Activated naive CD4-positive, alpha-beta T cell treated with anti-CD3 and anti-CD28 coated beads for 36 hours (primary cell): ENCODE measurements at regions of chr10 and their contacts with region 1.

Region 1: GRCh38 chr10:124802313-124802675 is 675 bp downstream of the ABRAXAS2 start:
- DNase-seq: peak; percentile 44
- H3K4me3 Mint-ChIP-seq: peak overlapping the region; percentile 90
- H3K27ac Mint-ChIP-seq: peak overlapping the region; percentile 83
- H3K4me1 Mint-ChIP-seq: peaks cover 17% of the 10 kb centered on the region
- H3K27me3 Mint-ChIP-seq: no peaks in the 10 kb centered on the region

Region 2: DNA sequence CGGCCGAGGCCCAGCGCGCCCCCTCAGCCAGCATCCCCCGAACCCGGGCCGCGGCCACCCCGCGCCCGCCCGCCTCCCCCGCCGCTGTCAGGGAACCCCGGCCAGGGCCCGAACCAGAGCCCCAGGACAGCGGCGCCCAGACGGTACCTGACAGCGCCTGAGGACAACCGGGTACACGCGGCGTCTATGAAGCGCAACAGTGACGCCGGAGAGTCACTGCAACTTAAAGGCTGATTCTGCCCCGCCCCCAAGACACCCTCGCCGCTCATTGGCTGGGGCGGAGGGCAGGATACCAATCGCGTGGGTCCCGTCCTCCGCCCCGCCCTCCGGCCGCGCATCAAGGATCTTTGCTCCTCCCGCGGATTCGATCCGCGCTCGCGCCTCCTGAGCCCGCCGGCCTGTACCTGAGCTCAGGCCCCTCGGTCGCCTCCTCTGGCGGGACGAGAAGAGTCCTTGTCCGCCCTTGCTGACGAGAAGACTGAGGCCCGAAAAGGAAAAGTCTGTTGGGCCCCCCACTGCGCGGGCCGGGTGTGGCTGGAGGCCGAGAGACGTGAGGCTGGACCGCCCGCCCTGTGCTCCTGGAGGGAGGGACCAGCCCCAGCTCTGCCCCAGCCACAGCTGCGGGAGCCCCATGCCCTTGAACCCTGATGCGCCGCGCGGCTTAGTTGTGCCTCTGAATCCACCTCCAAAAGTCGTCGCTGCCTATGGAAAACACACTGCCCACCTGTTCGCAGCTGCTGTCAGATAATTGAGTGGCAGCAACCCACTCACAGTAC is 383.4 kb before region 1 on chr10 and contains the start of gene OAT:
- CTCF ChIA-PET with region 1: no interaction called
- intact Hi-C with region 1: loop called (anchors 2 kb)
- DNase-seq: peak; percentile 98
- H3K4me3 Mint-ChIP-seq: peak within 1 kb of the TSS; percentile 76
- H3K27ac Mint-ChIP-seq: no peak within 1 kb of the TSS
- H3K4me1 Mint-ChIP-seq: peaks cover 25% of the 10 kb centered on the region
- H3K27me3 Mint-ChIP-seq: no peaks in the 10 kb centered on the region
- total RNA-seq, gene OAT: 37.4 to 41.6 TPM

Region 3: DNA sequence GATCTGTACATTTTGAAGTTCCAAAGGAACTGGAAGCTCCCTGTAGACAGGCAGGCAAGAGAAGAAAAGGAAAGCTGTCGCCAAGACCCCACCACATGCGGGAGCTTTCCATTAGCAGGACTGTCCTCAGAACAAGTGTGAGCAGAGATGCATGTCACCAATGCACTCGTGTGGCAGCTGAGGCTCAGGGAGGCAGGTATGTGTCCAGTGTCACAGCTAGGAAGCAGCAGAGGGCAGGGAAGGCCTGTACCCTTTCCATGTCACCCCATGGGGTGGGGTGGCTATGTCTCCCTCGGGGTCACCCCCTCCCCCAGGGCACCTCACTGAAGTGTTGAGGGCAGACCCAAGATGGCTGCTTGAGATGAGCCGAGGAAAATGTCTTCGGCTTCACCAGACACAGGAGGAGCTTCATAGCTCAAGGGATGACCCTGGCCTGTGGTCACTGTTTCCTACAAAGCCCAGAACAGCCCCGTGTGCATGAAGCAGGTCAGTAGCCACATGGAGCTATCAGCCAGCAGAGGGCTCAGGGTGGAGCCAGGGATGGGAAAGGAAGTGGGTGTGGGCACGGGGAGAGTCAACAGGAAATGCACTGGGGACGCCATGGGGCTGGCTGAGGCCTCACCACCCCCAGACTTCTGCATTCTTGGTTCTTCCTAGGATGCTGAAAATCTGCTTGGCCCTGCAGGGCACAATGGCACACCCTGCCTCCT is 154.7 kb before region 1 on chr10:
- CTCF ChIA-PET with region 1: no interaction called
- intact Hi-C with region 1: loop called (anchors 5 kb)
- DNase-seq: peak; percentile 88
- H3K4me3 Mint-ChIP-seq: peak overlapping the region; percentile 49
- H3K27ac Mint-ChIP-seq: peak overlapping the region; percentile 73
- H3K4me1 Mint-ChIP-seq: peaks cover 69% of the 10 kb centered on the region
- H3K27me3 Mint-ChIP-seq: no peaks in the 10 kb centered on the region

Region 4: GRCh38 chr10:124791378-124792348 is 10.6 kb before region 1 on chr10 and contains the start of gene EEF1AKMT2:
- CTCF ChIA-PET with region 1: interaction called, 3 read pairs
- intact Hi-C with region 1: loop called (anchors 1 kb)
- DNase-seq: peak; percentile 79
- H3K4me3 Mint-ChIP-seq: peak within 1 kb of the TSS; percentile 84
- H3K27ac Mint-ChIP-seq: peak within 1 kb of the TSS; percentile 93
- H3K4me1 Mint-ChIP-seq: peaks cover 18% of the 10 kb centered on the region
- H3K27me3 Mint-ChIP-seq: no peaks in the 10 kb centered on the region
- total RNA-seq, gene EEF1AKMT2: 22.5 to 25.5 TPM

Region 5: GRCh38 chr10:125822878-125823662 is 1020.8 kb after region 1 on chr10 and contains the starts of genes BCCIP and UROS:
- CTCF ChIA-PET with region 1: no interaction called
- intact Hi-C with region 1: loop called (anchors 5 kb)
- DNase-seq: peak; percentile 90
- H3K4me3 Mint-ChIP-seq: peak within 1 kb of the TSS; percentile 75
- H3K27ac Mint-ChIP-seq: peak within 1 kb of the TSS; percentile 66
- H3K4me1 Mint-ChIP-seq: peaks cover 28% of the 10 kb centered on the region
- H3K27me3 Mint-ChIP-seq: no peaks in the 10 kb centered on the region
- total RNA-seq, gene BCCIP: 103 to 107 TPM
- total RNA-seq, gene UROS: 30.8 to 32.9 TPM